Left ventricle myocardium inferior (tissue), 1 donor: ENCODE measurements at regions of chr1 and their contacts with region 1.

Region 1: DNA sequence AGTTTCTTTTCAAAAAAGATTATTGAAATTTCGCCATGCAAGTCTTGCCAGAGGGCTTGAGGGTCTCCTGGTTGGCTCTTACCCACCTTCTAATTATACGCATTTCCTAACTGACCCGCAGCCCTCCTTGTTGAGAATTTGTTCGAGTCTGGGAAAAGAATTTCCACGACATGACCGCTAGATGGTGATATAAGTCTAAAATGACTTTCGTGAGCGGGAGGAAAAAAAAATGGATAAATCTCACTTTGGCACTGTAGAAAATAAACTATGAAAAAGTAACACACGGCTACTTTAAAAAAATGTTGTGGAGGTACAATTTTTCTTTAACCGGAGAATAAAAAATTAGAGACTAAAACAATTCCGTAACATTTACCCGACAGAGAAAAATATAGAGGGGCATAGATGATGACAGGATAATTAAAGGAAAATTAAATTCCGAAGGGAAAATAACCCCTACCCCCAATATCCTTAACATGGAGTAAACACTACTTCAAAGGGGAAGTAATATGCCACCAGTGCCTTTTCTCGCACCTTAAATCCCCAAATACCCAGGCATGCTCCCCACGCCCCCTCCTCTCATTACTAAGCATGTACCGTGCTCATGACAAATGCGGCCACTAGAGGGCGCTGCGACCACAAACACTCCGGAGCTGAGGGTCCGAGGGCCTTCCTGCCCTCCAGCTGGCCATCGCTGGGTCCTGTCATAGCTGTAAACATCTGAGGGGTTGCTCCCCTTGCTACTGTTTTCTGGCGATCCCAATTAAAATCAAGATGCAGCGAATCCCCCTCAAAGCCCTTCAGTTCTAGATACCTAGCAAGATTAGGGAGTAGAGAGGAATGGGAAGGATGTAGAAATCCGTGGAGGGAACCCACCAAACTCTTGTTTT is 266.9 kb downstream of the ASTN1 start:
- DNase-seq: peak; percentile 49
- H3K4me3 ChIP-seq: peak overlapping the region; percentile 46
- H3K27ac ChIP-seq: no peak overlapping the region
- H3K4me1 ChIP-seq: peaks cover 15% of the 10 kb centered on the region
- H3K27me3 ChIP-seq: peaks cover 57% of the 10 kb centered on the region
- CTCF ChIP-seq: peak; percentile 65

Region 2: DNA sequence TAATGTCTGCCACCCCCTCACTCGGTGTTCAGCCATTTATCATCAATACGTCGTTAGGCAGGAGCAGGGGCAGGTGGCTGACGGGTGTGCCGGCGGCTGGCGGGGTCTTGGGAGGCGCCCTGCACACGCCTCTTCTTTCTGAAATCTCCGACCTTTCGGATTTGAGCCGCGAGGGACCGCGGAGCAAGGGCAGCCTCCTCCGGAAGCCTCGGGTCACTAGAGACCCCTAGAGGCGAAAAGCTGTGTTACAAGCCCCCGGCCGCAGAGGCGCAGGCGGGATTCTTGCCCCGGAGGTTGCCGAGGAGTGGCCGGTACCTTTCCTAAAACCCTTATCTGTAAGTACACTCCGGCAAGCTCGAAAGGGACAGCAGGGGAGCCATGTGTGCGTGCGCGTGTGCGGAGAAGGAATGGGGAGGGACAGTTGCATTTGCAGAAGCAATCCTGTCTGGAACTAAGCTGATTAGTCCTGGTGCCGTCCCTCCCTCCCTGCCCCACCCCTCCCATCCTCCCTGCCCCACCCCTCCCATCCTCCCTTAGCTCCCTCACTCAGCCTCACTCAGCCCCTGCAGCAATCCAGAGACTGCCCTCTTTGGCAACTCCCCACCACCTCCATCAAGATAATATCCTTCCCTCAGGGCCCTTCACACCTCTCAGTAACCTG is 284.2 kb after region 1 on chr1:
- intact Hi-C with region 1: loop called (anchors 5 kb)
- DNase-seq: peak; percentile 47
- H3K4me3 ChIP-seq: peak overlapping the region; percentile 42
- H3K27ac ChIP-seq: no peak overlapping the region
- H3K4me1 ChIP-seq: peaks cover 7% of the 10 kb centered on the region
- H3K27me3 ChIP-seq: peaks cover 88% of the 10 kb centered on the region
- CTCF ChIP-seq: peak; percentile 89

Region 3: DNA sequence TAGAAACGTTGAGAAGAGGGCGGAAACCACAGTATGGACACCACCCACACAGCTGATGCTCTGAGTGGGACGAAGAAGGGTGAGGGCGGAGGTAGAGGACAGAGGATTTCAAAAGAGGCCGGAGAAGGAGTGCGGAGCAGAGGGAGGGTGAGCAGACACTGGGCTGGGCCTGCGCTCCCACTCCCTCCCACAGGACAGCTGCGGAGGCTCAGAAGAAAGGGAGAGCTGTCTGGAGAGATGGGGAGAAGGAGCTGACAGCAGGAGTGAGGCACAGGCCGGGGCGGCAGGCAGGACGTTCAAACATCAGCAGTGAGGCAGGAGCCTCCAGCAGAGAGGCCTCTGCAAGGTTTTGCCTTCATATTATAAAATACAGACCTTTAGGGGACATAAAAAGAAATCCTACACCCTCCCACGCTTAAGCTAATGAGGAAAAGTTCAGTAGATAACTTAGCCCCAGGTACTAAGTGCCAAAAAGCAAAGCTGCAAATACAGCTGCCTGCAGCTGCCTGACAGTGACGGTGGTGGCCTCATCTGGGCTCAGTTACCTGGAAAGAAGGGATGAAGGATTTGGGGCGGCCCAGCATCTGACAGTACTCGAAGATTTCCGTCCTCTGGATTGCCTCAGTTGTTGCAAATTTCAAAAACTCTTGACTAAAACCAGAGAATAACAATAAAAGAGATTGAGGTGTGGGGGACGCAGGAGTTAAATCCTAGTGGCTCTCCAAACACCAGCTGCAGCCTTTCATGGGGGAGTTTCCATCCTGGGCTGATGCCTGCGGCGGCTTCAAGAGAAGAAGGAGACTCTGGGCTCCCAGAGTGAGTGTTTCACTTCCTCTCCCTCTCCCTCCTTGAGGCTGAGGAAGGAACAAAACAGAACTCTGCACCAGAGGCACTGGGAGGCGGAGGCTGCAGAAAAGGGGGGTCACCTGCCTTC is 1046.7 kb after region 1 on chr1:
- intact Hi-C with region 1: loop called (anchors 5 kb)
- DNase-seq: no peak
- H3K4me3 ChIP-seq: no peak overlapping the region
- H3K27ac ChIP-seq: no peak overlapping the region
- H3K4me1 ChIP-seq: peaks cover 17% of the 10 kb centered on the region
- H3K27me3 ChIP-seq: no peaks in the 10 kb centered on the region
- CTCF ChIP-seq: no peak